Activated CD4-positive, alpha-beta T cell treated with anti-CD3 and anti-CD28 coated beads, Interleukin-2, amount 10 ng/mL, durations not matched to agents 24 days and 14 days (primary cell): ENCODE measurements at regions of chr6 and their contacts with region 1.

Region 1: GRCh38 chr6:116531675-116532570 is 13.6 kb downstream of the TRAPPC3L start:
- DNase-seq: peak; percentile 91
- H3K4me3 Mint-ChIP-seq: no peak overlapping the region
- H3K27ac Mint-ChIP-seq: no peak overlapping the region
- H3K4me1 Mint-ChIP-seq: peaks cover 2% of the 10 kb centered on the region
- H3K27me3 Mint-ChIP-seq: peaks cover 59% of the 10 kb centered on the region

Region 2: GRCh38 chr6:116217069-116217468 is 314.9 kb before region 1 on chr6:
- intact Hi-C with region 1: loop called (anchors 5 kb)
- DNase-seq: no peak
- H3K4me3 Mint-ChIP-seq: no peak overlapping the region
- H3K27ac Mint-ChIP-seq: no peak overlapping the region
- H3K4me1 Mint-ChIP-seq: no peaks in the 10 kb centered on the region
- H3K27me3 Mint-ChIP-seq: no peaks in the 10 kb centered on the region

Region 3: DNA sequence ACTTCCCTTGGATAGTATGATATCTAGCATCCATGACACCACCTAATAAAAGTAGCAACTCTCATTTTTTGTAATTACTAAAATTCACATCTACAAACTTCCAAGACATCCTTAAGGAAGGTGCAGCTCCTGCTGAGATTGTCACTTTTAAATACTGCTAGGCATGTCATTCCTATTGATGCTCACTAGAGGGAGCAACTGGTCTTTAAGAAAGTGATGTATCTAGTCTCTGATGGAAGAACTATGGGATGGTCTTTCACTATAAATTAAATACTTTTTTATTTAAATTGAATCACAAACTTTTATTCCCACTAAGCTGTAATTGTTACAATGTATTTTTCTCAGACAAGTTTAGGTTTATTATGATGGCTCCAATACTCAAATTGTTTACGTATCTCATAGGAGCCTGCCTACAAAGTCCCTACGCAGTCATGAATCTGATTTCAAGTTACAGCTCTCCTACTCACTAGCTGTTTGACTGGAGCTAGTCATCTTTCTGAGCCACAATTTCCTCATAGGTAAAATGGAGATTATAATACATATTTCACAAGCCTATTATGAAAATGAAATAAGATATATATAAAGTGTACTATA is 244.1 kb before region 1 on chr6:
- intact Hi-C with region 1: loop called (anchors 1 kb)
- DNase-seq: peak; percentile 63
- H3K4me3 Mint-ChIP-seq: no peak overlapping the region
- H3K27ac Mint-ChIP-seq: no peak overlapping the region
- H3K4me1 Mint-ChIP-seq: no peaks in the 10 kb centered on the region
- H3K27me3 Mint-ChIP-seq: peaks cover 9% of the 10 kb centered on the region

Region 4: GRCh38 chr6:116444092-116444491 is 87.8 kb before region 1 on chr6:
- intact Hi-C with region 1: loop called (anchors 1 kb)
- DNase-seq: peak; percentile 63
- H3K4me3 Mint-ChIP-seq: no peak overlapping the region
- H3K27ac Mint-ChIP-seq: no peak overlapping the region
- H3K4me1 Mint-ChIP-seq: peaks cover 18% of the 10 kb centered on the region
- H3K27me3 Mint-ChIP-seq: peaks cover 27% of the 10 kb centered on the region

Region 5: DNA sequence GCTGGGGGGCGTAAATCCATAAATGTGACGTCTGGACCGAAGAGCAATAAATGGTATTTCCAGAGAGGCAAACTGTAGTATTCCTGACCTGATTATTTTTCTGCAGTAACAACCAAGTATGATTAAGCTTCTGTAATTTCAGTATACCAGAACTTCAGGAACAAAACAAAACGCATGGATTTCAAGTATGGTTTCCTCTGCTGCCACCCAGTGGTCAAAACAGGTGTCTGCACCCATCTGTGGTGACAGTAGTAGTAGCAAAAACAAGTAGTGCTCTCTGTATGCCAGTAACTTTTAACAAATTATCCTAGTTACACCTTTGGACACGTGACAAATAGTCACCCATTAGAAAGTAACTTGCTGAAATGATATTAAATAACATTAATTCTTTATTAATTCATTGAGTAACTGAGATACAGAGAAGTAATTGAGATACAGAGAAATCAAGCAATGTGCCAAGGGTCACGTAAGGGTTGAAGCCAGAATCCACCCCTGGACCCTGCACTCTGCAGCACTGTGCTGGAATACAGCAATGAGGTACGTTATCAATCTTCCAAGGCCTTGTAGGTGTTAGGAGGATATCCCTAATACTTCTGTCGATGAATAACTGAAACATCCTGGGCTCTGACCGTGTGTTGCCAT is 29.6 kb after region 1 on chr6:
- intact Hi-C with region 1: loop called (anchors 1 kb)
- DNase-seq: peak; percentile 90
- H3K4me3 Mint-ChIP-seq: no peak overlapping the region
- H3K27ac Mint-ChIP-seq: no peak overlapping the region
- H3K4me1 Mint-ChIP-seq: peaks cover 1% of the 10 kb centered on the region
- H3K27me3 Mint-ChIP-seq: peaks cover 18% of the 10 kb centered on the region

Region 6: GRCh38 chr6:116648156-116648555 is 116.2 kb after region 1 on chr6:
- intact Hi-C with region 1: loop called (anchors 2 kb)
- DNase-seq: no peak
- H3K4me3 Mint-ChIP-seq: no peak overlapping the region
- H3K27ac Mint-ChIP-seq: no peak overlapping the region
- H3K4me1 Mint-ChIP-seq: peaks cover 11% of the 10 kb centered on the region
- H3K27me3 Mint-ChIP-seq: no peaks in the 10 kb centered on the region

Region 7: DNA sequence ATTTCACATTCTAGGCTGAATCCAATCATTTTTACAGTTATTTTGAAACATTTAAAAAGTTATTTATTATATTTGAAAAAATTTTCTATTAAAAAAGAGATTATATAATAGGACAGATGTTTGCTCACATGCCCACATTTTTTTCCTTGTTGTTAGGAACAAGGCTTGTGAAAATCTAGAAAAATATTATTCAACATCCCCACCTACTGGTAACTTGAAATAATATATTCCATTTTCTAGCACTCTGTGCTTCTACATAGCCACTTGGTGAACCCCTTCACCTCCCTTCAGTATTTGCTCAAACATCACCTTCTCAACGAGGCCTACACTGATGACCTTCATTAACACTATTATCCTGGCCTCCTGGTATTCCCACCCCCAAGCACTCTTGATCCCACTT is 315.3 kb after region 1 on chr6:
- intact Hi-C with region 1: loop called (anchors 10 kb)
- DNase-seq: no peak
- H3K4me3 Mint-ChIP-seq: no peak overlapping the region
- H3K27ac Mint-ChIP-seq: no peak overlapping the region
- H3K4me1 Mint-ChIP-seq: no peaks in the 10 kb centered on the region
- H3K27me3 Mint-ChIP-seq: no peaks in the 10 kb centered on the region